OCI-LY7 (cell line): ENCODE measurements at regions of chr3 and their contacts with region 1.

Region 1: GRCh38 chr3:21894459-21895340 is 143.7 kb upstream of the ZNF385D start:
- DNase-seq: no peak
- H3K4me3 ChIP-seq: no peak overlapping the region
- H3K27ac ChIP-seq: no peak overlapping the region
- H3K4me1 ChIP-seq: no peaks in the 10 kb centered on the region
- CTCF ChIP-seq: peak; percentile 78

Region 2: DNA sequence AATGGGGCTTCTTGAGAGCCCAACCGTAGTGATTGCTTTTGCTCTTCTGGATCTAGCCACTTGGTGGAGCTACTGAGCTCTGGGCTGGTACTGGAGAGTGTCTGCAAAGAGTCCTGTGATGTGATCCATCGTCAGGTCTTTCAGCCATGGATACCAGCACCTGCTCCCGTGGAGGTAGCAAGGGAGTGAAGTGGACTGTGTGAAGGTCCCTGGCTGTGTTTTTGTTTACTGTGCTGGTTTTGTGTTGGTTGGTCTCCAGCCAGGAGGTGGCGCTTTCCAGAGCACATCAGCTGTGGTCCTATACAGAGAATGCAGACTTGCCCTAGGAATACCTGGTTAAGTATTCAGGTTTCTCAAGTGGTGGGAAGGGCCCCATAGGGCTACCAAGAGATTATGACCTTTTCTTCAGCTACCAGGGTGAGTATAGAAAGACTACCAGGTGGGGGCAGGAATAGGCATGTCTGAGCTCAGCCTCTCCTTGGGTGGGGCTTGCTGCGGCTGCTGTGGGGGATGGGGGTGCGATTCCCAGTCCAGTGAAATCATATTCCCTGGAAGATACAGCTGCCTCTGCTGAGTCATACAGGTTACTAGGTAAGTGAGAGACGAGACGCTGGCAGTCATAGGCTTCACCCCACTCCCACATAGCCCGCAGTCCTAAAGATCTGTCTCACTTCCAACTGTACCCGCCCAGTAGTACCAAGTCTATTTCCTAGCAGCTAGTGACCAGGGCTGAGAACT is 877.4 kb before region 1 on chr3:
- CTCF ChIA-PET with region 1: no interaction called
- POLR2A ChIA-PET with region 1: no interaction called
- intact Hi-C with region 1: loop called (anchors 5 kb)
- DNase-seq: no peak
- H3K4me3 ChIP-seq: no peak overlapping the region
- H3K27ac ChIP-seq: no peak overlapping the region
- H3K4me1 ChIP-seq: no peaks in the 10 kb centered on the region
- CTCF ChIP-seq: peak; percentile 71